ENCODE measurements at regions of chr6 and their contacts with region 1.

Region 1: GRCh38 chr6:149934249-149935156 is 7.3 kb upstream of the ULBP2 start:
- DNase-seq: peak in 2 of 6 donors; percentile 46 to 72
- ATAC-seq: peak; percentile 73 to 83 (median 82)
- H3K4me3 ChIP-seq: no peak overlapping the region
- H3K27ac ChIP-seq: no peak overlapping the region
- H3K4me1 ChIP-seq: peaks cover 0 to 12% (median 9%) of the 10 kb centered on the region in 3 donors
- H3K27me3 ChIP-seq: peaks cover 0 to 32% (median 7%) of the 10 kb centered on the region in 4 donors
- CTCF ChIP-seq: peak; percentile 42 to 62 (median 61)

Region 2: GRCh38 chr6:150004783-150005717 is 70.5 kb after region 1 on chr6:
- intact Hi-C with region 1: loop called in 1 of 3 experiments (anchors 5 kb)
- DNase-seq: peak; percentile 93 to 97 (median 96)
- ATAC-seq: peak; percentile 97 to 99 (median 99)
- H3K4me3 ChIP-seq: peak overlapping the region; percentile 40 to 66 (median 48)
- H3K27ac ChIP-seq: peak overlapping the region in 1 of 4 donors; percentile 21
- H3K4me1 ChIP-seq: peaks cover 0 to 4% (median 0%) of the 10 kb centered on the region in 3 donors
- H3K27me3 ChIP-seq: no peaks in the 10 kb centered on the region
- CTCF ChIP-seq: no peak

Region 3: DNA sequence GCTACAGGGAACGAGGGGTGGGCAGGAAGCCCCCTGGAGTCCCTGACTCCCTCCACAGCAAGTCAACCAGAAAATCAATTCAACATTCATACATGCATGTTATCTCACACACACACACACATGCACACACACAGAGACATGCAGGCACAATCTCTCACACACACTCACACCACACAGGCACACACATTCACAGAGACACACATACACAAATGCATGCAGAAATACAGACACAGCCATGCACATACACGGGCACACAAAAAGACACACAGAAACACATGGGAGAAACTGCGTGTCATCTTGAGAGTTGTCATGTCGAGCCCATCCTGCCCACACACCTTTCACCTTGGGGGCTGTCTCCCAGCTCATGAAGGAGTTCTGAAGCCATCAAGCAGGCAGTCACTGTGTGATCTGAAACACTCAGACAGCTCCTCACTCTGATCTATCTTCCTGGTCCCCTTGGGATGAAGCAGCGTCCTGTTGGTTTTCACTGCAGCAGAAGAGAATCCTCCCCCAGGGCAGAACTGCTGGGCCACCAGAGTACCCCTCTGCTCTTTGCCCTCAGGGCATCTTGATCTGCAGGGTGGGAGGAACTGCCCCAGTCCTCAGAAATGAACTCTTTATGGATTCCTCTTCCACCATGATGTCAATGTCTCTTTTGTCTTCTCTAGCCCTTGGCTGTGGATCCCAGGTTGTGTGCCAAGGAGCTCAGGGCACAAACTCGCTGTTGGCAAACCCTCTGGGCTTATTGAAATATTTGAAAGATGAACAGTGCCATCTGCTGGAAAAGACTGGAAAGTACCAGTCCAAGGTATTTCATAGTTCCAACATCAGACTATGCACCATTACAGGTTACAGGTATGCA is 82.1 kb after region 1 on chr6:
- intact Hi-C with region 1: loop called in 1 of 3 experiments (anchors 2 kb)
- DNase-seq: peak in 4 of 6 donors; percentile 53 to 73 (median 57)
- ATAC-seq: peak; percentile 68 to 97 (median 94)
- H3K4me3 ChIP-seq: no peak overlapping the region
- H3K27ac ChIP-seq: no peak overlapping the region
- H3K4me1 ChIP-seq: no peaks in the 10 kb centered on the region
- H3K27me3 ChIP-seq: peaks cover 0 to 13% (median 3%) of the 10 kb centered on the region in 4 donors
- CTCF ChIP-seq: peak; percentile 18 to 60 (median 54)

Region 4: GRCh38 chr6:150057501-150057951 is 123.0 kb after region 1 on chr6:
- intact Hi-C with region 1: no loop called
- DNase-seq: no peak
- ATAC-seq: no peak
- H3K4me3 ChIP-seq: no peak overlapping the region
- H3K27ac ChIP-seq: no peak overlapping the region
- H3K4me1 ChIP-seq: no peaks in the 10 kb centered on the region
- H3K27me3 ChIP-seq: no peaks in the 10 kb centered on the region
- CTCF ChIP-seq: no peak

Measured in pancreas (tissue), 10 donors.